BJ (cell line): ENCODE measurements at regions of chr22 and their contacts with region 1.

Region 1: DNA sequence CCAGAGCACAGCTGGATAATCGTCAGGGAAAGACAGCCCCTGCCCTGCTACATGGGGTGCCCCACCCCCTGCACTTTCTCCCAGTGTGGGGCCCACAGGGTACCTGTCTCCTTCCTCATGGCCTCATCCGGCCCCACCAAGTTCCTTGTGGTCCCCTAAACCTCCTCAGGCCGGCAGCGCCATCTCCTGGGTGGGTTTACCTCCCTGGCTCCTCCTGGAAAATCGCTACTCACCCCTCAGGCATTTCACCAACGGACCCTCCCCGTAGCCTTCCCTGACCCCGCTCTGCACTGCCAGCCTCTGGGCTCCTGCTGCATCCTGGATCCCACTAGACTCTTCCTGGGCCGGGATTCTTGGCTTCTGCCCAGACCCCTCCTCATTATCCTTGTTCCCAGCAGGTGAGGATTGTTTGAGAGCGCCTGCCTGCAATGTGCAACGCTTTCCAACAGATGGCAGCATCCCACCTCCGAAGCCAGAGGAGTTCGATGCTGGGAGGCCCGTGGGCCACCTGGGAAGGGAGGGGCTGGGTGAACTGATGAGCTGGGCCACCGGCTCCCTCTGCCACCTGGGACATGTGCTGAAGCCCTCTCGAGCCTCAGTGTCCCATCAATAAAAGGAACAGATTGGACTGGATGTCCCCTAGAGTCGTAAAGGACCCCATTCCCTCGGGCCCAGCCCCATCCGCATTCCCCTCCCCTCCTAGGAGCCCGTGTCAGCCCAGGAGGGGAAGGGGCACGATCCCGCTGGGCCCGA is 44.2 kb upstream of the TTLL12 start:
- DNase-seq: no peak
- H3K4me3 ChIP-seq: no peak overlapping the region
- H3K27me3 ChIP-seq: peaks cover 6% of the 10 kb centered on the region
- CTCF ChIP-seq: peak; percentile 85

Region 2: GRCh38 chr22:43216738-43217137 is 14.4 kb before region 1 on chr22:
- CTCF ChIA-PET with region 1: interaction called, 12 read pairs
- POLR2A ChIA-PET with region 1: no interaction called
- DNase-seq: no peak
- H3K4me3 ChIP-seq: no peak overlapping the region
- H3K27me3 ChIP-seq: 0 out of 2 replicates have a peak, but pooled peaks cover 2% of the 10 kb centered on the region
- CTCF ChIP-seq: no peak